Activated B cell treated with CpG ODN at 0.5 μM for 24 hours (primary cell): ENCODE measurements at regions of chr10 and their contacts with region 1.

Region 1: DNA sequence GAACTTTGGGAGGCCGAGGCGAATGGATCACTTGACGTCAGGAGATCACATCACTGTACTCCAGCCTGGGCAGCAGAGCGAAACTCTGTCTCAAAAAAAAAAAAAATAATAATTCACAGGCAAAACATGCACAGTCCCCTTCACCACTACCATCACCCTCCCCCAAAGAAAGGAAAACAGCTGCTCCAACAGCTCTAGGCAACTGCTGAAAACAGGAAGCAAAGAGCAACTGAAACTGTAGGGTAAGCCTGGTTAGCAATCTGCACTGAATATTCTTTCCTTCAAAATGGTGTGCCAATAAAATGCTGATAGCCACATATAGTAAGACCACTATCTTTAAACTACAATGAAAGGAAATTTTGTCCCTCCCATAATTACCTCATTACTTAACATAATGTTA is 11.8 kb downstream of the NT5C2 start:
- DNase-seq: no peak
- ATAC-seq: peak; percentile 92
- H3K4me3 Mint-ChIP-seq: peak overlapping the region; percentile 68
- H3K27ac Mint-ChIP-seq: peak overlapping the region; percentile 89
- H3K4me1 Mint-ChIP-seq: peaks cover 77% of the 10 kb centered on the region
- H3K27me3 Mint-ChIP-seq: no peaks in the 10 kb centered on the region
- CTCF ChIP-seq: no peak

Region 2: DNA sequence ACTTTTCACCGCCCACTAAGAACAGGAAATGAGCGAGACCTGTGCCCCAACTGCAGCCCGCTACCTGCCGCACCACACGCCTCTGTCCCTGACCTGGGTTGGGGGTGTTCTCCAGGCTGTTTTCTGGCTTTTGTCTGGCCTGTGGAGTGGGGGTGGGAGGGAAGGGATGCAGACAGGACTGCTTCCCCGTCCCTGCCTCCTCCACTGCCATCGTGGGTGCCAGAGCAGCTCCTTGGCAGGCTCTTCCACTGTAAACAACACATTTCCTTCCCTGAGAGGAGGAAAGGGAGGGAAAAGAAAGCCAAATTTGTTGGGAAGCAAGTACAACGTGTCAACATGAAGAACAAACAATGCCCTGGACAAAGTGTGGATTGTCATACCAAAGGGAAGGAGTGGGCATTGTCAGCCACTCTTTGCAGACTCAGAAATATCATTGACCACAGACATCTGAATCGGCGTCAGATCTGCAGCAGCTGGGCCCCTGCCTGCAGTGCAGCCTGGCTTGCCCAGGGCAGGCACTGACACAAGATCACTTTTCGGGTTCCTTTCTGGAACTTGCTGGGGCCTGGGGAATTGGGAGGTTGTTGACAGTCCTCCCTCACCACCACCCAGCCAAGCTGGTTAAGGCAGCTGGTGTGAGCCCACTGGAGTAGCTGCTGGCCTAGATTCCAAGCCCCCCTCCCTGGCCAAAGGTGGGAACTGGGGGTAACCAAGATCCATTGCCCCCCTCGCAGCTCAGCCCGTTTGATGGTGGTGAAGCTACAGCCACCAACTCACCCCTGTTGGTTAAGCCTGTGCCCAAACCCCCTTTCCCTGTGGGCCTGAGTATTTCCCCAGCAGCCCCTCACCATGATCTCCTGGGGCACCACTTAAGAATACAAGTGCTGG is 559.6 kb before region 1 on chr10:
- CTCF ChIA-PET with region 1: no interaction called
- POLR2A ChIA-PET with region 1: no interaction called
- intact Hi-C with region 1: no loop called
- DNase-seq: no peak
- ATAC-seq: no peak
- H3K4me3 Mint-ChIP-seq: no peak overlapping the region
- H3K27ac Mint-ChIP-seq: no peak overlapping the region
- H3K4me1 Mint-ChIP-seq: peaks cover 11% of the 10 kb centered on the region
- H3K27me3 Mint-ChIP-seq: no peaks in the 10 kb centered on the region
- CTCF ChIP-seq: no peak

Region 3: DNA sequence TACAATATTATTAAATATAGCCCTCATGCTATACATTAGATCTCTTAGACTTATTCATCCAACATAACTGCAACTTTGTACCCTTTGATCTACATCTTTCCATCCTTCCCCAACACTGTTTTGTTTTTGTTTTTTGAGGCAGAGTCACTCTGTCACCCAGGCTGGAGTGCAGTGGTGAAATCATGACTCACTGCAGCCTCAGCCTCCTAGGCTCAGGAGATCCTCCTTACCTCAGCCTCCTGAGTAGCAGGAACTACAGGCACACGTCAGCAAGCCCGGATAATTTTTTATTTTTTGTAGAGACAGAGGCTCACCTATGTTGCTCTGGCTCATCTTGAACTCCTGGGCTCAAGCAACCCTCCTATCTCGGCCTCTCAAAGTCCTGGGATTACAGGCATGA is 41.4 kb before region 1 on chr10:
- CTCF ChIA-PET with region 1: no interaction called
- POLR2A ChIA-PET with region 1: interaction called, 11 read pairs
- intact Hi-C with region 1: no loop called
- DNase-seq: no peak
- ATAC-seq: no peak
- H3K4me3 Mint-ChIP-seq: no peak overlapping the region
- H3K27ac Mint-ChIP-seq: no peak overlapping the region
- H3K4me1 Mint-ChIP-seq: peaks cover 11% of the 10 kb centered on the region
- H3K27me3 Mint-ChIP-seq: no peaks in the 10 kb centered on the region
- CTCF ChIP-seq: no peak